ENCODE measurements at regions of chr6 and their contacts with region 1.

Region 1: GRCh38 chr6:11277275-11278206 is 45.1 kb upstream of the NEDD9 start:
- DNase-seq: peak; percentile 94
- ATAC-seq: peak; percentile 78
- H3K4me3 ChIP-seq: peak overlapping the region; percentile 23; the same call in 1 of the 2 replicates
- H3K27ac ChIP-seq: peak overlapping the region; percentile 95
- H3K4me1 ChIP-seq: peaks cover 46% of the 10 kb centered on the region
- H3K27me3 ChIP-seq: no peaks in the 10 kb centered on the region
- CTCF ChIP-seq: no peak
- EP300 ChIP-seq: peak; percentile 65 to 83; a peak in 2 of 4 replicates
- POLR2A ChIP-seq: peak; percentile 55
- RAD21 ChIP-seq: peak; percentile 12; the same call in 1 of the 2 replicates

Region 2: GRCh38 chr6:11172501-11173332 is 104.8 kb before region 1 on chr6:
- CTCF ChIA-PET with region 1: interaction called, 4 read pairs
- POLR2A ChIA-PET with region 1: no interaction called
- RAD21 ChIA-PET with region 1: interaction called, 5 read pairs
- SMC1A ChIA-PET with region 1: interaction called, 6 read pairs
- in situ Hi-C with region 1: no loop called
- intact Hi-C with region 1: loop called (anchors 5 kb)
- DNase-seq: no peak
- ATAC-seq: peak; percentile 89
- H3K4me3 ChIP-seq: no peak overlapping the region
- H3K27ac ChIP-seq: no peak overlapping the region
- H3K4me1 ChIP-seq: no peaks in the 10 kb centered on the region
- H3K27me3 ChIP-seq: no peaks in the 10 kb centered on the region
- CTCF ChIP-seq: peak; percentile 81 to 88 (median 81)
- EP300 ChIP-seq: no peak
- POLR2A ChIP-seq: no peak
- RAD21 ChIP-seq: peak; percentile 83

Region 3: GRCh38 chr6:11251541-11252360 is 25.8 kb before region 1 on chr6:
- CTCF ChIA-PET with region 1: interaction called, 5 read pairs
- POLR2A ChIA-PET with region 1: interaction called, 5 read pairs
- RAD21 ChIA-PET with region 1: interaction called, 23 read pairs
- SMC1A ChIA-PET with region 1: interaction called, 7 read pairs
- in situ Hi-C with region 1: no loop called
- intact Hi-C with region 1: no loop called
- DNase-seq: no peak
- ATAC-seq: peak; percentile 55
- H3K4me3 ChIP-seq: no peak overlapping the region
- H3K27ac ChIP-seq: no peak overlapping the region
- H3K4me1 ChIP-seq: no peaks in the 10 kb centered on the region
- H3K27me3 ChIP-seq: no peaks in the 10 kb centered on the region
- CTCF ChIP-seq: no peak
- EP300 ChIP-seq: no peak
- POLR2A ChIP-seq: no peak
- RAD21 ChIP-seq: no peak

Region 4: DNA sequence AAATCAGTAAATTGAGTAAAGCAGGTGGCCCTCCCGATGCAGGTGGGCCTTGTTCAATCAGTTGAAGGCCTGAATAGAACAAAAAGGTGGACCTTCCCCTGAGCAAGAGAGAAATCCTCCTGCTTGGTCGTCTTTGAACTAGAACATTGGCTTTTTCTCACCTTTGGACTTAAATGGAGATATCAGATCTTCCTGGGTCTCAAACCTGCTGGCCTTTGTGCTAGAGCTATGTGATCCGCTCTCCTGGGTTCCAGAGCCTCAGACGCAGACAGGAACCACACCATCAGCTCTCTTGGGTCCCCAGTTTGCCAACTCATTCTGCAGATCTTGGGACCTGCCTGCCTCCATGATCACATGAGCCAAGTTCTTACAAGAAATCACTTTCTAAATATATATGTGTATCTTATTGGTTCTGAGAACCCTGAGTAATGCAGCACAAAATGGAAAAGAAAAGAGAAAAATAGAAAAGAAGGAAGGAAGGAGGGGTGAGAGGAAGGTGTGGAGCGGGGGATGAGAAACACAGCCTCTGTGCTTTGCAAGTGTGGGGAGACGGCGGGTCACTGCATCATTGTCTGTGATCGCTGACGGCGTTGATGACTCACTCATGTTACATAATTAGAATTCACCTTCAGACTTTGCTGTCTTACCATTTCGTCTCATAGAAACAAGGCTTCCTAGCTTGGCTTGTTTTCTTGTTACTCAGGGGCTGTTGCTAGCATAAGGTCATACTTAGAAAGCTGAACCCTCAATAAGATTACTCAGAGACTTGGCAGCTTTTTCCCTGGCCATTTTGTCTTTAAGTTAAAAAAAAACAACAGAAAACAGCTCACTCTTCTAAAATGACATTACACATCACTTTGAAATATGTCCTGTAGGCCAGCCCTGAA is 40.6 kb after region 1 on chr6:
- CTCF ChIA-PET with region 1: interaction called, 5 read pairs
- POLR2A ChIA-PET with region 1: interaction called, 14 read pairs
- RAD21 ChIA-PET with region 1: interaction called, 66 read pairs
- SMC1A ChIA-PET with region 1: interaction called, 59 read pairs
- in situ Hi-C with region 1: no loop called
- intact Hi-C with region 1: loop called (anchors 5 kb)
- DNase-seq: no peak
- ATAC-seq: peak; percentile 83
- H3K4me3 ChIP-seq: no peak overlapping the region
- H3K27ac ChIP-seq: peak overlapping the region; percentile 16; the same call in 1 of the 2 replicates
- H3K4me1 ChIP-seq: peaks cover 17% of the 10 kb centered on the region
- H3K27me3 ChIP-seq: no peaks in the 10 kb centered on the region
- CTCF ChIP-seq: no peak
- EP300 ChIP-seq: peak; percentile 9 to 69; a peak in 1 of 4 replicates
- POLR2A ChIP-seq: no peak
- RAD21 ChIP-seq: 0 out of 2 replicates have a peak, but pooled peaks have one; percentile 10

Region 5: GRCh38 chr6:11366183-11366933 is 88.8 kb after region 1 on chr6:
- CTCF ChIA-PET with region 1: interaction called, 4 read pairs
- POLR2A ChIA-PET with region 1: interaction called, 16 read pairs
- RAD21 ChIA-PET with region 1: interaction called, 59 read pairs
- SMC1A ChIA-PET with region 1: interaction called, 63 read pairs
- in situ Hi-C with region 1: no loop called
- intact Hi-C with region 1: loop called (anchors 1 kb)
- DNase-seq: peak; percentile 89
- ATAC-seq: peak; percentile 86
- H3K4me3 ChIP-seq: peak overlapping the region; percentile 15; the same call in 1 of the 2 replicates
- H3K27ac ChIP-seq: peak overlapping the region; percentile 78
- H3K4me1 ChIP-seq: peaks cover 64% of the 10 kb centered on the region
- H3K27me3 ChIP-seq: no peaks in the 10 kb centered on the region
- CTCF ChIP-seq: no peak
- EP300 ChIP-seq: 0 out of 4 replicates have a peak, but pooled peaks of 1 of the 2 experiments have one; percentile 12
- POLR2A ChIP-seq: peak; percentile 45; the same call in 1 of the 2 replicates
- RAD21 ChIP-seq: no peak

Region 6: GRCh38 chr6:11460001-11460668 is 182.6 kb after region 1 on chr6:
- CTCF ChIA-PET with region 1: interaction called, 18 read pairs
- POLR2A ChIA-PET with region 1: interaction called, 24 read pairs
- RAD21 ChIA-PET with region 1: interaction called, 75 read pairs
- SMC1A ChIA-PET with region 1: interaction called, 58 read pairs
- in situ Hi-C with region 1: no loop called
- intact Hi-C with region 1: loop called (anchors 1 kb)
- DNase-seq: peak; percentile 75
- ATAC-seq: peak; percentile 65
- H3K4me3 ChIP-seq: peak overlapping the region; percentile 28; the same call in 1 of the 2 replicates
- H3K27ac ChIP-seq: peak overlapping the region; percentile 96
- H3K4me1 ChIP-seq: peaks cover 40% of the 10 kb centered on the region
- H3K27me3 ChIP-seq: no peaks in the 10 kb centered on the region
- CTCF ChIP-seq: peak in 2 of 3 experiments; percentile 17 to 21; a peak in 3 of 6 replicates
- EP300 ChIP-seq: 0 out of 4 replicates have a peak, but pooled peaks of 1 of the 2 experiments have one; percentile 7
- POLR2A ChIP-seq: 0 out of 2 replicates have a peak, but pooled peaks have one; percentile 37
- RAD21 ChIP-seq: no peak; the same call in 1 of the 2 replicates

Region 7: GRCh38 chr6:11732036-11732631 is 454.6 kb after region 1 on chr6:
- CTCF ChIA-PET with region 1: no interaction called
- POLR2A ChIA-PET with region 1: no interaction called
- RAD21 ChIA-PET with region 1: no interaction called
- SMC1A ChIA-PET with region 1: no interaction called
- in situ Hi-C with region 1: no loop called
- intact Hi-C with region 1: no loop called
- DNase-seq: peak; percentile 99
- ATAC-seq: peak; percentile 87
- H3K4me3 ChIP-seq: no peak overlapping the region
- H3K27ac ChIP-seq: peak overlapping the region; percentile 89
- H3K4me1 ChIP-seq: peaks cover 43% of the 10 kb centered on the region
- H3K27me3 ChIP-seq: no peaks in the 10 kb centered on the region
- CTCF ChIP-seq: no peak
- EP300 ChIP-seq: peak; percentile 86 to 94
- POLR2A ChIP-seq: peak; percentile 56
- RAD21 ChIP-seq: peak; percentile 47

Region 8: GRCh38 chr6:12051861-12052368 is 774.4 kb after region 1 on chr6:
- CTCF ChIA-PET with region 1: no interaction called
- POLR2A ChIA-PET with region 1: no interaction called
- RAD21 ChIA-PET with region 1: no interaction called
- SMC1A ChIA-PET with region 1: no interaction called
- in situ Hi-C with region 1: no loop called
- intact Hi-C with region 1: no loop called
- DNase-seq: peak; percentile 92
- ATAC-seq: peak; percentile 76
- H3K4me3 ChIP-seq: 0 out of 2 replicates have a peak overlapping the region, but pooled peaks have one; percentile 11
- H3K27ac ChIP-seq: peak overlapping the region; percentile 98
- H3K4me1 ChIP-seq: peaks cover 47% of the 10 kb centered on the region
- H3K27me3 ChIP-seq: no peaks in the 10 kb centered on the region
- CTCF ChIP-seq: peak in 1 of 3 experiments; percentile 6; a peak in 1 of 6 replicates
- EP300 ChIP-seq: peak; percentile 95 to 98
- POLR2A ChIP-seq: no peak
- RAD21 ChIP-seq: 0 out of 2 replicates have a peak, but pooled peaks have one; percentile 7